Right ventricle myocardium inferior (tissue), 1 donor: ENCODE measurements at regions of chr5 and their contacts with region 1.

Region 1: GRCh38 chr5:10627160-10627701 is 63.4 kb downstream of the ANKRD33B start:
- DNase-seq: no peak
- ATAC-seq: peak; percentile 2

Region 2: GRCh38 chr5:10452768-10453331 is 174.4 kb before region 1 on chr5:
- intact Hi-C with region 1: loop called (anchors 1 kb)
- DNase-seq: no peak
- ATAC-seq: peak; percentile 75

Region 3: DNA sequence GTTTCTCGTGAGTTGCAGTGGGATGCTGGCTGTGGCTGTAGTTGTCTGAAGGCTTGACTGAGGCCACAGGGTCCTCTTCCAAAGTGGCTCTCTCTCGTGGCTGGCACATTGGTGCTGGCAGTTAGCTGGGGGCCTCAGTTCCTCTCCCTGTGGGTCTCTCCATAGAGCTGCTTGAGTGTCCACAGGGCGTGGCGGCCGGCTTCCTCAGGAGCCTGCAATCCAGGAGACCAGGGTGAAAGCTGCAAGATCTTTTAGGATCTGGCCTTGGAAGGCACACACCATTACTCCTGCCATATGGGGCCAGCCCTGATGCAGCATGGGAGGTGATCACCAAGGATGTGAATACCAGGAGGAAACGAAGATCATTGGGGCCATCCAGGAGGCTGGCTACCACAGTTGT is 22.3 kb before region 1 on chr5:
- intact Hi-C with region 1: loop called (anchors 2 kb)
- DNase-seq: no peak
- ATAC-seq: no peak